WTC11 (cell line): ENCODE measurements at regions of chr21 and their contacts with region 1.

Region 1: DNA sequence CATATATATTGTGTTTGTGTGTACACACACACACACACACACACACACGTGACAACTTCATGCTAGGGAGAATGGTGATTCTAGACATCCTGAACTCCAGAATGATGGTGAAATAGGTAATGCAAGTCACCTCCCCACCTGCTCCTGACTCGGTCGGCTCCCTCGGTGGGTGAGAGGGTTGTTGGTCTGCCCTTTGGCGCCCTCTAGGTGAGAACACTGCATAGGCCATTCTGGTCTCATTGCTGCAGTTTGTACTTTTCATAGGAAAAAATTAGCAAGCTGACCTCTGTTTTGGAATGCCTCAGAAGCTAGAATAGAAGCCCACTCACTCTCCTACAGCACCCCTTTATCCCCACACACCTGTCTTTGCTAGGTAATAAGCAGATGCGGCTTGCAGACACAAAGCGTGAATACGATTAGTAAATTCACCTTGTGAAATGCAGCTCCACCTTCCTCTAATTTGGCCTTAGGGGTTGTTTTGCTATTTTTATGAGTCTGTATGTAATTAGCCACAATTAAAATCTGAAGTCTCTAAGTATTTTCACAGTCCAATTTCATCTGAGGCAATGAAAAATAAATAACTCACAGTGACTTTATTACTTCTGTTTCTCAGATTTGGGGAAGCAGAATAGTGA is 130.0 kb upstream of the KCNJ15 start:
- DNase-seq: peak; percentile 83
- ATAC-seq: peak; percentile 97
- H3K4me3 Mint-ChIP-seq: no peak overlapping the region
- H3K27ac Mint-ChIP-seq: no peak overlapping the region
- H3K4me1 Mint-ChIP-seq: no peaks in the 10 kb centered on the region
- H3K27me3 Mint-ChIP-seq: no peaks in the 10 kb centered on the region
- CTCF ChIP-seq: peak; percentile 70

Region 2: DNA sequence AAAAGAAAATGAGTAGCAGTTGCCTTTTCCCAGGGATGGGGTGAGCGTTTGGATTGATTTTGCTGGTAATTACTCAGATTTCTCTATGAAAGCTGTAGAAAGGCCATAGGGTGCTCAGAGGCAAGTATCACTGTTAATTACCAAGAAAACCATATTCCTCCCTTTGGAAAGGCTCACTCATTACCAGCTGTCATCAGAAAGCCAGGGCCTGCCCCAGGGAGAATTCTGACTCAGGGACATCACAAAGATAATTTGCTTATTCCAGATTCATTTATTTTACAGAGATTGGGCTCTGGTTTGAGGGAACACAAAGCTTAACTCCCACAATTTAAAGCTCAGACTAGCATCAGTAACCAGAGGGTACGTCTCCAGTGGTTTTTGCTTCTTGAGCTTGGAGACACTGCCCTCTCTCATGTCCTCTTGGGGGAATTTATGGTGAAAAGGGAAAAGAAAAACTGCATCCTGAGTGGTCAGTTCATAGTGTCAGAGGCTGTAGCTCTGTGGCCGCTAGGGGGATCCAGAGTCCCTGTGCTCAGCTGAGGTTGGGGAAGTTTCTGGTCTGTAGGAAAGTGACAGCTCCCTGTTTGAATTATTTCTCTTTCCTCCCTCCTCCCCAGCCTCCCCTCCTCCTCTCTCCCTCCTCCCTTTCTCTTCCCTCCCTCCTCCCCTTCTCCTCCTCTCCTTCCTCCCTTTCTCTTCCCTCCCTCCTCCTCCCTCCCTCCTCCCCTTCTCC is 414.8 kb before region 1 on chr21:
- CTCF ChIA-PET with region 1: interaction called, 16 read pairs
- POLR2A ChIA-PET with region 1: no interaction called
- DNase-seq: peak; percentile 75
- ATAC-seq: peak; percentile 96
- H3K4me3 Mint-ChIP-seq: no peak overlapping the region
- H3K27ac Mint-ChIP-seq: no peak overlapping the region
- H3K4me1 Mint-ChIP-seq: peaks cover 10% of the 10 kb centered on the region
- H3K27me3 Mint-ChIP-seq: no peaks in the 10 kb centered on the region
- CTCF ChIP-seq: peak; percentile 78

Region 3: GRCh38 chr21:37758982-37759381 is 367.8 kb before region 1 on chr21:
- CTCF ChIA-PET with region 1: interaction called, 27 read pairs
- POLR2A ChIA-PET with region 1: no interaction called
- DNase-seq: peak; percentile 79
- ATAC-seq: peak; percentile 89
- H3K4me3 Mint-ChIP-seq: no peak overlapping the region
- H3K27ac Mint-ChIP-seq: no peak overlapping the region
- H3K4me1 Mint-ChIP-seq: peaks cover 27% of the 10 kb centered on the region
- H3K27me3 Mint-ChIP-seq: no peaks in the 10 kb centered on the region
- CTCF ChIP-seq: peak; percentile 65

Region 4: DNA sequence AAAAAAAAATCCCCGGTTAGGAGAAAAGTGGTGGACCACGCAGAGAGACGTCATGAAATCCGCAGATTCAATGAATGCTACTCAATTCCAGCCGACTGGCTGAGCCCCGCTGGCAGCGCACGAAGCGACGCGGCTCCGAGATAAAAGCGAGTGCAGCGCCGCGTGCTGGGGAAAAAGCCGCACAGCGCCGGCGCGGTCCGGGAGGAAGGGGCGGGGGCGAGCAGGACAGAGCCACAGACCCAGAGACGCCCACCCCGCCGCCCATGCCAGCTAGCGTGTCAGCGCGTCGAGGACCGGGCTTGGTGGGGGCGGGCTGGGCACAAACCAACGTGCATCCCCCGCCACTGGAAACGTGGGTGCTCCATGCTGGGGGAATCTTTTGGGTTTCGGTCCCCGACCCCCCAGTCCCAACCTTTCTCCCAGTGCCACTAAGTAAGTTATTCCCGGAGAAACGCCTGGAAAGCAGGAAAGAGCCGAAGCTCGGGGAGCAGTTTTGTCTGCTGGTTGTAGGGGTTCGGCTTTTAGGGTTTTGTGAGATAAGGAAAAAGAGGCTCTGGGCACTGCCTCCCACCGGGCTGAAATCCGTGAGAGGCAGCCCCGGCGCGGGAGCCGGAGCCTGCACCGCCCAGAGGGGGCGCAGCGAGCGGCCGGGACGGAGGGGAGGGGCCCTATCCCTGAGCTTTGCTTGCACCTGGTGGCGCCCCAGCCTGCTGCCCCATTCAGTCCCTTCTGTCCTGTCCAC is 210.3 kb before region 1 on chr21 and contains the start of gene KCNJ6:
- CTCF ChIA-PET with region 1: interaction called, 16 read pairs
- POLR2A ChIA-PET with region 1: no interaction called
- DNase-seq: peak; percentile 87
- ATAC-seq: peak; percentile 83
- H3K4me3 Mint-ChIP-seq: peak within 1 kb of the TSS; percentile 86
- H3K27ac Mint-ChIP-seq: 0 out of 2 replicates have a peak within 1 kb of the TSS, but pooled peaks have one; percentile 39
- H3K4me1 Mint-ChIP-seq: peaks cover 39% of the 10 kb centered on the region
- H3K27me3 Mint-ChIP-seq: peaks cover 34% of the 10 kb centered on the region
- CTCF ChIP-seq: peak; percentile 39
- total RNA-seq, gene KCNJ6: 0.23 to 0.35 TPM (median 0.34 TPM) in 3 replicates

Region 5: GRCh38 chr21:38148046-38148445 is 21.3 kb after region 1 on chr21:
- CTCF ChIA-PET with region 1: interaction called, 10 read pairs
- POLR2A ChIA-PET with region 1: no interaction called
- DNase-seq: no peak
- ATAC-seq: no peak
- H3K4me3 Mint-ChIP-seq: no peak overlapping the region
- H3K27ac Mint-ChIP-seq: no peak overlapping the region
- H3K4me1 Mint-ChIP-seq: peaks cover 12% of the 10 kb centered on the region
- H3K27me3 Mint-ChIP-seq: no peaks in the 10 kb centered on the region; the same call in 1 of the 2 replicates
- CTCF ChIP-seq: no peak